ENCODE measurements at regions of chr1 and their contacts with region 1.

Region 1: GRCh38 chr1:155989242-155990004 is 11.1 kb upstream of the ARHGEF2 start:
- DNase-seq: peak; percentile 88
- ATAC-seq: peak; percentile 100
- H3K4me3 ChIP-seq: peak overlapping the region in 2 of 5 experiments; percentile 8 to 19
- H3K4me3 Mint-ChIP-seq: no peak overlapping the region
- H3K27ac ChIP-seq: peak overlapping the region; percentile 11 to 32
- H3K27ac Mint-ChIP-seq: peak overlapping the region; percentile 73
- H3K4me1 ChIP-seq: peaks cover 24 to 32% of the 10 kb centered on the region in 2 donors
- H3K4me1 Mint-ChIP-seq: peaks cover 24% of the 10 kb centered on the region
- H3K27me3 ChIP-seq: no peaks in the 10 kb centered on the region
- H3K27me3 Mint-ChIP-seq: no peaks in the 10 kb centered on the region
- CTCF ChIP-seq: peak; percentile 98

Region 2: GRCh38 chr1:155911156-155912055 is 78.0 kb before region 1 on chr1 and contains the start of gene RIT1:
- CTCF ChIA-PET with region 1: interaction called, 6 read pairs
- POLR2A ChIA-PET with region 1: no interaction called
- intact Hi-C with region 1: loop called (anchors 2 kb)
- DNase-seq: peak; percentile 91
- ATAC-seq: peak; percentile 98
- H3K4me3 ChIP-seq: peak within 1 kb of the TSS; percentile 64 to 90 (median 71)
- H3K4me3 Mint-ChIP-seq: peak within 1 kb of the TSS; percentile 96
- H3K27ac ChIP-seq: peak within 1 kb of the TSS; percentile 59 to 79
- H3K27ac Mint-ChIP-seq: peak within 1 kb of the TSS; percentile 97
- H3K4me1 ChIP-seq: peaks cover 14 to 16% of the 10 kb centered on the region in 2 donors
- H3K4me1 Mint-ChIP-seq: peaks cover 23% of the 10 kb centered on the region
- H3K27me3 ChIP-seq: no peaks in the 10 kb centered on the region
- H3K27me3 Mint-ChIP-seq: no peaks in the 10 kb centered on the region
- CTCF ChIP-seq: no peak
- total RNA-seq, gene RIT1: 43.4 and 45.7 TPM in 2 replicates

Region 3: DNA sequence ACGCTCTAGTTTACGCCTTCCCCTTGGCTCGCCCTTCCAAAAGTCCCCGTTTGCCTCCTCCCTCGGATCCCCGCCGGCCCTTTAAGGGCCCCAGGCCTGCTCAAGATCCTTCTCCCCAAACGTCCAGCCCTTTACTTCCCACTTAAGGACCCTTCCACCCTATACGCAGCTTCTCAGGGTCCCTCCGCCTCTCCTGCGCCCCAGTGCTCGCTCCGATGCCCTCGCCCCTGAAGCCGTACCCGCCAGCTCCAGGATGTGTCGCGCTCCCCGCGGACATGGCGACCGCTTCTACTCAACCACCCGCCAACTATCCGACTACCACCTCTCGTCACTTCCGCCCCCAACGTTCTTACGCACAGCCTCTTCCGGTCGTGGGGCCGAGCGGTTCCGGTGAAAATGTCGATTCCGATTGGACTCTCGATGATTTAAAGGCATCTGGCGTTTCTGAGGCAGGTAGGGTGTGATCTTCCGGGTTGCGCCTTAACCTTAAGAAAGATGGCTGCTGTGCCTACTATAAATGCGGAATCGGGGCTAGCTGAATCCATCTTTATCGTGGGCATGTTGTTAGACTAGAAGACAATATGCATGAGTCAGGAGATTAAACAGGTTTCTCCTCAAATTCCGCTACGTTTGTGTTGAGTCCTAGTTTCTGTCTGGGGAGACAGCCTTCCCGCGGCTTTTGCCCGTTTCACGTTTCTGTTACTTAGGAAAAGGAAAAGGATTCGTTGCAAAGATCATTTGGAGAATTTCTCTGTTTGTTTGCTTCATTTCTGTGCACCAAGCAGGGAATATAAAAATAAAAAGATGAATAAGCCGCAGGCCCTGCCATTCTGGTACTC is 55.1 kb before region 1 on chr1 and contains the start of gene KHDC4:
- CTCF ChIA-PET with region 1: interaction called, 206 read pairs
- POLR2A ChIA-PET with region 1: interaction called, 11 read pairs
- intact Hi-C with region 1: loop called (anchors 1 kb)
- DNase-seq: peak; percentile 98
- ATAC-seq: peak; percentile 93
- H3K4me3 ChIP-seq: peak within 1 kb of the TSS; percentile 79 to 97 (median 84)
- H3K4me3 Mint-ChIP-seq: no peak within 1 kb of the TSS
- H3K27ac ChIP-seq: peak within 1 kb of the TSS; percentile 86 to 89
- H3K27ac Mint-ChIP-seq: peak within 1 kb of the TSS; percentile 54
- H3K4me1 ChIP-seq: peaks cover 43 to 55% of the 10 kb centered on the region in 2 donors
- H3K4me1 Mint-ChIP-seq: peaks cover 37% of the 10 kb centered on the region
- H3K27me3 ChIP-seq: no peaks in the 10 kb centered on the region
- H3K27me3 Mint-ChIP-seq: no peaks in the 10 kb centered on the region
- CTCF ChIP-seq: peak; percentile 57
- total RNA-seq, gene KHDC4: 122 TPM in 2 replicates

Region 4: GRCh38 chr1:155961937-155962336 is 27.5 kb before region 1 on chr1:
- CTCF ChIA-PET with region 1: interaction called, 33 read pairs
- POLR2A ChIA-PET with region 1: interaction called, 5 read pairs
- intact Hi-C with region 1: loop called (anchors 1 kb)
- DNase-seq: no peak
- ATAC-seq: no peak
- H3K4me3 ChIP-seq: no peak overlapping the region
- H3K4me3 Mint-ChIP-seq: peak overlapping the region; percentile 59
- H3K27ac ChIP-seq: peak overlapping the region; percentile 28 to 69
- H3K27ac Mint-ChIP-seq: peak overlapping the region; percentile 82
- H3K4me1 ChIP-seq: peaks cover 41 to 68% of the 10 kb centered on the region in 2 donors
- H3K4me1 Mint-ChIP-seq: peaks cover 66% of the 10 kb centered on the region
- H3K27me3 ChIP-seq: no peaks in the 10 kb centered on the region
- H3K27me3 Mint-ChIP-seq: no peaks in the 10 kb centered on the region
- CTCF ChIP-seq: no peak

Region 5: GRCh38 chr1:155978325-155978972 is 11.0 kb before region 1 on chr1 and contains the start of gene ARHGEF2:
- CTCF ChIA-PET with region 1: interaction called, 98 read pairs
- POLR2A ChIA-PET with region 1: interaction called, 22 read pairs
- intact Hi-C with region 1: loop called (anchors 1 kb)
- DNase-seq: peak; percentile 89
- ATAC-seq: peak; percentile 76
- H3K4me3 ChIP-seq: peak within 1 kb of the TSS; percentile 76 to 93 (median 81)
- H3K4me3 Mint-ChIP-seq: peak within 1 kb of the TSS; percentile 95
- H3K27ac ChIP-seq: peak within 1 kb of the TSS; percentile 70 to 91
- H3K27ac Mint-ChIP-seq: peak within 1 kb of the TSS; percentile 94
- H3K4me1 ChIP-seq: peaks cover 63 to 73% of the 10 kb centered on the region in 2 donors
- H3K4me1 Mint-ChIP-seq: peaks cover 81% of the 10 kb centered on the region
- H3K27me3 ChIP-seq: no peaks in the 10 kb centered on the region
- H3K27me3 Mint-ChIP-seq: no peaks in the 10 kb centered on the region
- CTCF ChIP-seq: peak; percentile 6
- total RNA-seq, gene ARHGEF2: 245 and 247 TPM in 2 replicates

Measured in B cell (primary cell).